Activated CD8-positive, alpha-beta T cell treated with anti-CD3 and anti-CD28 coated beads for 36 hours (primary cell): ENCODE measurements at regions of chr20 and their contacts with region 1.

Region 1: GRCh38 chr20:50929299-50930138 is 1.7 kb downstream of the ADNP start:
- DNase-seq: peak; percentile 99
- ATAC-seq: peak; percentile 79
- H3K4me3 Mint-ChIP-seq: peak overlapping the region; percentile 82
- H3K27ac Mint-ChIP-seq: peak overlapping the region; percentile 92
- H3K4me1 Mint-ChIP-seq: peaks cover 50% of the 10 kb centered on the region
- H3K27me3 Mint-ChIP-seq: no peaks in the 10 kb centered on the region
- CTCF ChIP-seq: peak; percentile 81

Region 2: DNA sequence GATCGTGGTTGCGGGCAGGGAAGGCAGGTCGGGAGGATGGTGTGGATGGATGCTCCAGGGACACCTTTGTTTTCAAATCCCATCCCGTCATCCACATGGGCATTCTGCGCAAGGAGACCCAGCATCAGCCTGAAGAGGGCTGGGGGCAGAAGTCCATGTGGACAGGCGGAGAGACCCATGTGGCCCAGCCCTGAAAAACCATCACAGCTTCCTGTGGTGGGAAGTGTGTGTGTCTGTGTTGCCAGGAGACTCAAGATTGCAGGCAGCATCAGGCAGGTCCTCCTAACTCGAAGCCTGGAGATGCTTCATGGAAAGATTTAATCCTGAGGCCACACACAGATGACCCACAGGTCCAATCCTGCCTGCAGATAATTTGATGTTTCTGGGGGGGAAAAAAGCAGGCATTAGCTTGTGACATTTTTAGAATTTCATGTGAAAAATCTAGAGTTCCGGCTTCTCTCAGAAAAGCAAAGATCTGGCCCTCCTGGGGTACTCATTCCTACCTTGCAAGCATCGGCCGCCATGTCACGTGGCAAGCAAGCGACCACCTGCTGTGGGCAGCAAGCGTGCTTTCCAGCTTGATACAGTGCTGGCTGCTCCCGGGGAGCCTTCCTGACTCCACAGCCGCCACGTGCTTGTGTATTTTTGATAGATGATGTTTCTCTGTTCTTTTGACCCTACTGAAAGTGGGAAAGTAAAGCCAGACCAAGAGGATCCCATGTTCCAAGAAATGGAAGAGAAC is 108.8 kb before region 1 on chr20:
- CTCF ChIA-PET with region 1: interaction called, 34 read pairs
- POLR2A ChIA-PET with region 1: interaction called, 23 read pairs
- intact Hi-C with region 1: loop called (anchors 5 kb)
- DNase-seq: no peak
- ATAC-seq: no peak
- H3K4me3 Mint-ChIP-seq: no peak overlapping the region
- H3K27ac Mint-ChIP-seq: peak overlapping the region; percentile 35
- H3K4me1 Mint-ChIP-seq: peaks cover 46% of the 10 kb centered on the region
- H3K27me3 Mint-ChIP-seq: no peaks in the 10 kb centered on the region
- CTCF ChIP-seq: no peak

Region 3: GRCh38 chr20:50891138-50891537 is 38.4 kb before region 1 on chr20:
- CTCF ChIA-PET with region 1: interaction called, 6 read pairs
- POLR2A ChIA-PET with region 1: interaction called, 17 read pairs
- intact Hi-C with region 1: no loop called
- DNase-seq: no peak
- ATAC-seq: peak; percentile 21
- H3K4me3 Mint-ChIP-seq: no peak overlapping the region
- H3K27ac Mint-ChIP-seq: peak overlapping the region; percentile 79
- H3K4me1 Mint-ChIP-seq: peaks cover 31% of the 10 kb centered on the region
- H3K27me3 Mint-ChIP-seq: no peaks in the 10 kb centered on the region
- CTCF ChIP-seq: no peak

Region 4: GRCh38 chr20:50913690-50914375 is 15.7 kb before region 1 on chr20:
- CTCF ChIA-PET with region 1: interaction called, 55 read pairs
- POLR2A ChIA-PET with region 1: interaction called, 31 read pairs
- intact Hi-C with region 1: no loop called
- DNase-seq: peak; percentile 60
- ATAC-seq: peak; percentile 96
- H3K4me3 Mint-ChIP-seq: no peak overlapping the region
- H3K27ac Mint-ChIP-seq: peak overlapping the region; percentile 17
- H3K4me1 Mint-ChIP-seq: peaks cover 83% of the 10 kb centered on the region
- H3K27me3 Mint-ChIP-seq: no peaks in the 10 kb centered on the region
- CTCF ChIP-seq: no peak

Region 5: DNA sequence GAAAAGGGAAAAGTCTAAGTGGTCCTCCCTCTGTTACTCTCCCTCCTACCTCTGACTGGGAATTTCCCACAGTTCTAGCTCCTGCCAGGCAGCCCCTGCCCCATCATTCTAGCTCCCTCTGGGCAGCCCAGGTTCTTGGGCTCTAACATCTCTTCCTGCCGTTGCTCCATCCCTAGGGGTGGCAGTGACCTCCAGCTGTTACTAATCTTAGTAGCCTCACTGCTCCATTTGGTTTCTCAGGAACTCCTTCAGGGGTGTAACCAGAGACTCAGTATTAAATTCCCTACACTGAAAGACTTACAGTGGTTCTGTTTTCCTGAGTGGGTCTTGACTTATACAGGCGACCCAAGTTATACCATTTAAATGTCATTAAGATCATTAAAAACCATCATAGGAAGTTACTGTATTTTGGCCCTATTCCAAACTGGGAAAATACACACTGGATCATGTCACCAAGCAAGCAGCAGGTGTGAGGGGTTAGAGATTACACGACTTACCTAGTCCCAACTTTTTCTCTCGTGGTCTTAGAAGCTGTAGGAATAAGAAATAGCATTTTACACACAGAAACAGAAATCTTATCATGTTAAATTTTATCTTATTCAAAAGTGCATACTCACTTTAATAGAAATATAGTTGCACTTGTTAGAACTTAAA is 18.7 kb after region 1 on chr20:
- CTCF ChIA-PET with region 1: interaction called, 10 read pairs
- POLR2A ChIA-PET with region 1: interaction called, 5 read pairs
- intact Hi-C with region 1: no loop called
- DNase-seq: no peak
- ATAC-seq: no peak
- H3K4me3 Mint-ChIP-seq: no peak overlapping the region
- H3K27ac Mint-ChIP-seq: no peak overlapping the region
- H3K4me1 Mint-ChIP-seq: peaks cover 6% of the 10 kb centered on the region
- H3K27me3 Mint-ChIP-seq: no peaks in the 10 kb centered on the region
- CTCF ChIP-seq: no peak

Region 6: DNA sequence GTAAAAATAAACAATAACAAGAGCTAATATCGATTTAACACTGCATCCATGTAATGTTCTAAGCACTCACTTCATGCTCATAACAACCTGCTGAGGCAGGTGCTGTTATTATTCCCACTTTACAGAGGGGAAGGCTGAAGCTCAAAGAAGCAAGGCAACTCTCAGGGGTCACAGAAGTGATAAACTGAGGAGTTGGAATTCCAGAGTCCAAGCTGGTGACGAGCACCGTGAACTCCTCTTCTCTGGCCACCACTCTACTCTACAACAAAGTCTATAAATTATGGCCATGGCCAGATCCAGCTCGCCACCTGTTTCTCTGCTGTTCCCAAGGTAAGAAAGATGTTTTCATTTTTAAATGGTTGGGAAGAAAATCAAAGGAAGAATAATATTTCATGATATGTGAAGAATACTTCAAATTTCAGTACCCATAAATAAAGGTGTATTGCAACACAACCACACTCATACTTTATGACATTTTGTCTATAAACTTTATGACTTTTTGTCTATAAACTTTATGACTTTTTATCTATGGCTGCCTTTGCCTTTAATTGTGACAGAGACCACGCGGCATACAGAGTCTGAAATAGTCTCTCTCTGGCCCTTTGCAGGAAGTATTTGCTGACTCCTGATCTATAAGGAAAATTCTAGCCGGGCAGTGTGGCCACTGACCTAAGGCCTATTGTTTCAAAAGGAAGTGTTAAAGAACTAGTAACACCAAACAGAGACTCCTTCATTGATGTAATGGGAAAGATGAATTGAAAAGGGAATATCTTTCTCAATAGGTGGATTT is 206.6 kb after region 1 on chr20:
- CTCF ChIA-PET with region 1: no interaction called
- POLR2A ChIA-PET with region 1: no interaction called
- intact Hi-C with region 1: no loop called
- DNase-seq: no peak
- ATAC-seq: no peak
- H3K4me3 Mint-ChIP-seq: no peak overlapping the region
- H3K27ac Mint-ChIP-seq: no peak overlapping the region
- H3K4me1 Mint-ChIP-seq: no peaks in the 10 kb centered on the region
- H3K27me3 Mint-ChIP-seq: peaks cover 11% of the 10 kb centered on the region
- CTCF ChIP-seq: no peak